Activated CD4-positive, alpha-beta memory T cell treated with anti-CD3 and anti-CD28 coated beads for 36 hours (primary cell): ENCODE measurements at regions of chr2 and their contacts with region 1.

Region 1: GRCh38 chr2:71068218-71069035 is at the start of gene NAGK:
- DNase-seq: peak; percentile 98
- H3K4me3 Mint-ChIP-seq: peak within 1 kb of the TSS; percentile 94
- H3K27ac Mint-ChIP-seq: peak within 1 kb of the TSS; percentile 96
- H3K4me1 Mint-ChIP-seq: peaks cover 54% of the 10 kb centered on the region
- H3K27me3 Mint-ChIP-seq: no peaks in the 10 kb centered on the region
- total RNA-seq, gene NAGK: 47.5 to 54.7 TPM

Region 2: GRCh38 chr2:70994756-70995729 is 73.4 kb before region 1 on chr2 and contains the start of gene TEX261:
- CTCF ChIA-PET with region 1: no interaction called
- POLR2A ChIA-PET with region 1: no interaction called
- intact Hi-C with region 1: loop called (anchors 1 kb)
- DNase-seq: peak; percentile 94
- H3K4me3 Mint-ChIP-seq: peak within 1 kb of the TSS; percentile 93
- H3K27ac Mint-ChIP-seq: peak within 1 kb of the TSS; percentile 91
- H3K4me1 Mint-ChIP-seq: peaks cover 31% of the 10 kb centered on the region
- H3K27me3 Mint-ChIP-seq: no peaks in the 10 kb centered on the region
- total RNA-seq, gene TEX261: 29.0 to 29.9 TPM

Region 3: DNA sequence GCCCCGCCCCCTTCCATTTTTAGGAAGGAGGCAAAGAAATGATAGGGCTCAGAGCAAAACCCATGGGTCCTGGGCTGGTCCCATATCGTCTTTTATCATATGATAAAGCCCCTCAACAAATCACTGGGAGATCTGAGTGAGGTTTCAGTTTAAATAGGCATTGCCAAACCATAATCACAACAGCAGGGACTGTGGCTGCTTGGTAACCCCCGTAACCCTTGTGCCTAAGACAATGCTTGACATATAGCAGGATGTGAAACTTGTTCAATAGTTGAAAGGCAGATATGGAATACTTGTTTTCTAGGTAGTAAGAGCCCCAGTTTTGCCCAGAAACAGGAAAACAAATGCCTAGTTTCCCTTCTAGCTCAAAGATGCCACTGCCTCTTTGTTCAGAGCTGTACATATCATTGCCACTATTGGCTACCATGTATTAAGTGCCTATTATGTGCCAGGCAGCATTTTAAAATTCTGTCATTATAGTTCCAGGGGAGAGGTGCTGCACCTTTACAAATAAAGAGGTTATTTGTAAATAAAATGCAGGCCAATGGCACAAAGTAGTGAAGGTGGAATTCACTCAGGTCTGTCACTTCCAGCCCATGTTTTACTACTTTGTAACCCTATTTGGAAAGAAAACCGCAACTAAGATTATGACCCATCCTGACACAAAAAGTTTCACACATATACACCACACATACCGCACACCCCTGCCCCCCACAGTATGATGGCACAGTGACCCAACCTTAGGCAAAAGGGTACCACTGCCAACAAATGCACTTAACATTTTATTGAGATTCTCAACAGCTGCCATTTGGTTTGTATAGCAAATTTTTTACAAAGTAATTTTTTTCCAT is 14.2 kb after region 1 on chr2:
- CTCF ChIA-PET with region 1: interaction called, 11 read pairs
- POLR2A ChIA-PET with region 1: interaction called, 7 read pairs
- intact Hi-C with region 1: loop called (anchors 1 kb)
- DNase-seq: peak; percentile 88
- H3K4me3 Mint-ChIP-seq: no peak overlapping the region
- H3K27ac Mint-ChIP-seq: peak overlapping the region; percentile 15
- H3K4me1 Mint-ChIP-seq: peaks cover 17% of the 10 kb centered on the region
- H3K27me3 Mint-ChIP-seq: peaks cover 15% of the 10 kb centered on the region

Region 4: GRCh38 chr2:71130113-71130904 is 61.9 kb after region 1 on chr2 and contains the starts of genes MCEE and MPHOSPH10:
- CTCF ChIA-PET with region 1: interaction called, 27 read pairs
- POLR2A ChIA-PET with region 1: interaction called, 20 read pairs
- intact Hi-C with region 1: loop called (anchors 1 kb)
- DNase-seq: peak; percentile 94
- H3K4me3 Mint-ChIP-seq: no peak within 1 kb of the TSS
- H3K27ac Mint-ChIP-seq: no peak within 1 kb of the TSS
- H3K4me1 Mint-ChIP-seq: peaks cover 11% of the 10 kb centered on the region
- H3K27me3 Mint-ChIP-seq: no peaks in the 10 kb centered on the region
- total RNA-seq, gene MCEE: 12.0 to 16.1 TPM
- total RNA-seq, gene MPHOSPH10: 37.1 to 38.5 TPM

Region 5: GRCh38 chr2:71331581-71332434 is 263.4 kb after region 1 on chr2 and contains the start of gene ZNF638:
- CTCF ChIA-PET with region 1: interaction called, 3 read pairs
- POLR2A ChIA-PET with region 1: interaction called, 3 read pairs
- intact Hi-C with region 1: loop called (anchors 1 kb)
- DNase-seq: peak; percentile 94
- H3K4me3 Mint-ChIP-seq: peak within 1 kb of the TSS; percentile 94
- H3K27ac Mint-ChIP-seq: peak within 1 kb of the TSS; percentile 93
- H3K4me1 Mint-ChIP-seq: peaks cover 31% of the 10 kb centered on the region
- H3K27me3 Mint-ChIP-seq: peaks cover 2% of the 10 kb centered on the region
- total RNA-seq, gene ZNF638: 74.2 to 87.4 TPM